ENCODE measurements at regions of chr18 and their contacts with region 1.

Region 1: GRCh38 chr18:29164020-29164706 is 987.2 kb upstream of the CDH2 start:
- DNase-seq: peak; percentile 96
- ATAC-seq: peak; percentile 74
- H3K4me3 ChIP-seq: no peak overlapping the region
- H3K27ac ChIP-seq: peak overlapping the region; percentile 100
- H3K4me1 ChIP-seq: peaks cover 11% of the 10 kb centered on the region
- H3K27me3 ChIP-seq: no peaks in the 10 kb centered on the region
- CTCF ChIP-seq: no peak
- POLR2A ChIP-seq: peak; percentile 44; the same call in 1 of the 2 replicates
- RAD21 ChIP-seq: peak; percentile 10; the same call in 1 of the 2 replicates

Region 2: GRCh38 chr18:28823506-28824182 is 340.5 kb before region 1 on chr18:
- CTCF ChIA-PET with region 1: no interaction called
- POLR2A ChIA-PET with region 1: no interaction called
- dilution Hi-C with region 1: no loop called
- in situ Hi-C with region 1: no loop called
- intact Hi-C with region 1: no loop called
- DNase-seq: no peak
- ATAC-seq: no peak
- H3K4me3 ChIP-seq: no peak overlapping the region
- H3K27ac ChIP-seq: no peak overlapping the region
- H3K4me1 ChIP-seq: no peaks in the 10 kb centered on the region
- H3K27me3 ChIP-seq: no peaks in the 10 kb centered on the region
- CTCF ChIP-seq: no peak
- POLR2A ChIP-seq: no peak
- RAD21 ChIP-seq: no peak

Region 3: DNA sequence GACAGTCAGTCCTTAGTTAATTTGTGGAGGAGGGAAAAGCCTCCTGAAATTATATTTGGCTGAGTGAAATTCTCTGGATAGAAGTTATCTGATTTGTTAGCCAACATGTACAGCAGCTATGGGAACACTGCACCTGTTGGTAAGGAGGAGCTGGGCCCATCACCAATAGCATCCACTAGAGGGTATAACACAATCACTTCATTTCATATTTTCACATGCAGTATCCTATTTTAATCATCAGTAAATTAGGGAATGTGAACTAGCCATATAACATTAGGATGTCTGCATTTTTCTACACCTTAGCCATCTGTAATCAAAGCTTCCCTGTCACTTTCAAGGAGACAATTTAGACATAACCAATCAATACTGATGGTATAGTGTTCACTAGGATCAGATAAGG is 168.8 kb before region 1 on chr18:
- CTCF ChIA-PET with region 1: no interaction called
- POLR2A ChIA-PET with region 1: no interaction called
- dilution Hi-C with region 1: no loop called
- in situ Hi-C with region 1: no loop called
- intact Hi-C with region 1: loop called (anchors 5 kb)
- DNase-seq: peak; percentile 7
- ATAC-seq: no peak; the same call in 1 of the 2 replicates
- H3K4me3 ChIP-seq: no peak overlapping the region
- H3K27ac ChIP-seq: no peak overlapping the region
- H3K4me1 ChIP-seq: peaks cover 2% of the 10 kb centered on the region; the same call in 1 of the 2 replicates
- H3K27me3 ChIP-seq: no peaks in the 10 kb centered on the region
- CTCF ChIP-seq: peak; percentile 32
- POLR2A ChIP-seq: no peak
- RAD21 ChIP-seq: peak; percentile 35

Region 4: DNA sequence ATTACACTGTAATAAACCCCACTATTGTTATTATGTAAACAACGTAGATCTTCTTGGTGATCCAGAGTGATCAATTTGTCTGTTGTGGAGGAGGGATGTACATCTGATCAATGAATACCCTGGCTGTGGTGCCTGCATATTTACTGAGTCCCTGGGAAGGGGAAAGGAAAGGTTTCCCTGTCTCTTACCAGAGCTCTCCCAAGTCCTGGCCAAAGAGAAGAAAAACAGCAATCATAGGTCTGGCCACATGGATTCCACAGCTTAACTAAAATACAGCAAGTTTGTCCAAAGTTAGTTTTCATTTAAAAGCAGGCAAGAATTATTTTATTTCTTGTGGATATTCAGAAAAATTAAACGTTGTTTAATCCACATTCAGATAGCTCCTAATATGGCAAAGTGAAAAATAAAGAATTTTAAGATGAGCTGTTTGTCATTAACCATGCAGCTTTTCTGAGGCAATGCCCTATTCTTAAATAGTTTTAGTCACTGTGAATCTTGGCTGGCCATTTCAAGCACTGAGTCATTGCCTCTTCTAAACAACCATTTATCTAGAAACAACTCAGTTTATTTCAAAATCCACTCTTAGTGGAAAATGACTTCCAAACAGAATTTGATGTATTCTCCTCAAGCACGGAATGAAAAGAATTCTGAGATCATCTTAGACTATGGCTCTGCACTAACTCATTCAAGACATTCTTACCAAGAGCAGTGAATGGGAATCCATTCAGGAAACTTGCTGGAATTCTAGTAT is 17.2 kb after region 1 on chr18:
- CTCF ChIA-PET with region 1: no interaction called
- POLR2A ChIA-PET with region 1: interaction called, 3 read pairs
- dilution Hi-C with region 1: no loop called
- in situ Hi-C with region 1: no loop called
- intact Hi-C with region 1: loop called (anchors 1 kb)
- DNase-seq: peak; percentile 98
- ATAC-seq: peak; percentile 92
- H3K4me3 ChIP-seq: no peak overlapping the region
- H3K27ac ChIP-seq: peak overlapping the region; percentile 95
- H3K4me1 ChIP-seq: peaks cover 7% of the 10 kb centered on the region
- H3K27me3 ChIP-seq: no peaks in the 10 kb centered on the region
- CTCF ChIP-seq: no peak
- POLR2A ChIP-seq: no peak
- RAD21 ChIP-seq: no peak

Region 5: GRCh38 chr18:29361853-29362252 is 197.7 kb after region 1 on chr18:
- CTCF ChIA-PET with region 1: no interaction called
- POLR2A ChIA-PET with region 1: no interaction called
- dilution Hi-C with region 1: no loop called
- in situ Hi-C with region 1: no loop called
- intact Hi-C with region 1: no loop called
- DNase-seq: no peak
- ATAC-seq: no peak
- H3K4me3 ChIP-seq: no peak overlapping the region
- H3K27ac ChIP-seq: no peak overlapping the region
- H3K4me1 ChIP-seq: no peaks in the 10 kb centered on the region
- H3K27me3 ChIP-seq: no peaks in the 10 kb centered on the region
- CTCF ChIP-seq: no peak
- POLR2A ChIP-seq: no peak
- RAD21 ChIP-seq: no peak